ENCODE measurements at regions of chr2 and their contacts with region 1.

Region 1: GRCh38 chr2:23584054-23584745 is 199.2 kb downstream of the KLHL29 start:
- DNase-seq: peak; percentile 38 to 83
- H3K4me3 ChIP-seq: peak overlapping the region in 1 of 2 donors; percentile 8
- H3K27ac ChIP-seq: peak overlapping the region; percentile 67 to 81
- H3K4me1 ChIP-seq: peaks cover 3 to 4% of the 10 kb centered on the region in 2 donors
- H3K27me3 ChIP-seq: no peaks in the 10 kb centered on the region
- CTCF ChIP-seq: no peak

Region 2: GRCh38 chr2:23617167-23617810 is 33.1 kb after region 1 on chr2:
- intact Hi-C with region 1: loop called (anchors 2 kb)
- DNase-seq: peak in 1 of 2 donors; percentile 81
- H3K4me3 ChIP-seq: no peak overlapping the region
- H3K27ac ChIP-seq: peak overlapping the region; percentile 52 to 72
- H3K4me1 ChIP-seq: peaks cover 0 to 13% of the 10 kb centered on the region in 2 donors
- H3K27me3 ChIP-seq: no peaks in the 10 kb centered on the region
- CTCF ChIP-seq: peak in 2 of 3 experiments; percentile 31 to 33

Measured in ascending aorta (tissue), 2 donors.